Psoas muscle (tissue), 8 donors: ENCODE measurements at regions of chr4 and their contacts with region 1.

Region 1: GRCh38 chr4:107317611-107318010 is 281.5 kb upstream of the DKK2 start:
- DNase-seq: no peak
- ATAC-seq: no peak
- H3K4me3 ChIP-seq: no peak overlapping the region
- H3K27ac ChIP-seq: no peak overlapping the region
- H3K4me1 ChIP-seq: no peaks in the 10 kb centered on the region
- H3K27me3 ChIP-seq: no peaks in the 10 kb centered on the region
- CTCF ChIP-seq: no peak

Region 2: DNA sequence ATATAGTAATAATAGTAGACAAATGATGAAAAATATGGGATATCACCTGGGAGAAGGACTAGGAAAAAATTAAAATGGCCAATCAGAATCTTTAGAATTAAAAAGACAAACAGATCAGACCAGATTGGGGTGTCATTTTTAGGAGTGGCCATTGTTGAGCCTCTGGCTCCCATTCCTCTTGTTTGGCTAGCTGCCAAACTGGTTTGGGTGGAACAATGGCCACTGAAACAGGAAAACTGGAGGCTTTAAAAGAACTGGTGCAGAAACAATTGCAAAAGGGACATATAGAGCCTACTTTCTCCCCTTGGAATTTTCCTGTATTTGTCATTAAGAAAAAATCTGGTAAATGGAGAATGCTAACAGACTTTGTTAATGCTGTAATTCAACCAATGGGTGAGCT is 13.3 kb after region 1 on chr4:
- intact Hi-C with region 1: loop called in 1 of 2 experiments (anchors 1 kb)
- DNase-seq: no peak
- ATAC-seq: no peak
- H3K4me3 ChIP-seq: no peak overlapping the region
- H3K27ac ChIP-seq: no peak overlapping the region
- H3K4me1 ChIP-seq: no peaks in the 10 kb centered on the region
- H3K27me3 ChIP-seq: no peaks in the 10 kb centered on the region
- CTCF ChIP-seq: no peak